HepG2 (cell line): ENCODE measurements at regions of chr4 and their contacts with region 1.

Region 1: DNA sequence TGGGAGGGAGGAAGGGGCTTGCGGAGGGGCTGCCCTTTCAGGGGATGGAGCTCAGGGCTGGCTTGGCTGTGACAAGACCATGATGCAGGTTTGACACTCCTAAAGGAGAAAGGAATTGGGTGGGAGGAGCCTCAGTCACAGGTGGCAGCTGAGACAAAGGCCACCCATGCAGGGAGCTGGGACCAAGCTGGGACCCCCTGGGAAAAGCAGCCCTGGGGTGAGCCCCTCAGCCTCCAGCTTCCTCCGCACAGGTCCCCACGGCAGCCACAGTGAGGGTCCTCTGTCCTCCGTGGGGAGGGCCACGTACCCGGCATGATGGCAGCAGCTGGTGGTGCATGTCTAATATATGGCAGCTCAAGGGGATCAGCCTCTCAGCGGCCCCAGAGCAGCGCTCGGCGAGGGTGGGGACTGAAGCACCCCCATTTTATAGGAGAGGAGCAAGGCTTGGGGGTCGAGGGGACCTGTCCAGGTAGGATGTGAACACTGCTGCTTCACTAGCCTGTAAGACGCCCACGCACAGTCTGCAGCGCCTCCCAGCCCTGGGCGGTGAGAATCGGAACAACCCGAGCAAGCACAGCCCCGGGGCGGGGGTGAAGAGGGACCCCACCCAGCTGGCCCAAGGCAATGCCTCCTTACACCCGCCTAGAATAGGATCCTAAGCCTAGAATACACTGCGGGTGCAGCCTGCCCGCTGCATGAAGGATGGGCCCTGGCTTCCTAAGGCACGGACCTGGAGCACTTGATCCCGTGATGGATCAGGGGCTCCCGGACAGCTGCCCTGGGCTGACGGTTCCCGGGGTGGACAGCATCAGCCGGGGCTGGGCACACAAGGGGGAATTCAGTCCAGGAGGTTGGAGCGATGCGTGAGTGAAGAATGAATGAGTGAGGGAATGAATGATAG is 17.5 kb downstream of the ADRA2C start:
- DNase-seq: no peak
- ATAC-seq: peak; percentile 27
- H3K4me3 ChIP-seq: peak overlapping the region in 1 of 3 experiments; percentile 48; a peak in 3 of 6 replicates
- H3K27ac ChIP-seq: peak overlapping the region; percentile 72
- H3K4me1 ChIP-seq: peaks cover 95% of the 10 kb centered on the region
- H3K27me3 ChIP-seq: peaks cover 0 to under 1% of the 10 kb centered on the region in 2 experiments; a peak in 1 of 5 replicates
- CTCF ChIP-seq: peak; percentile 75
- EP300 ChIP-seq: no peak
- POLR2A ChIP-seq: no peak
- RAD21 ChIP-seq: peak; percentile 48

Region 2: GRCh38 chr4:3765271-3766040 is 18.2 kb before region 1 on chr4:
- CTCF ChIA-PET with region 1: no interaction called
- POLR2A ChIA-PET with region 1: interaction called, 87 read pairs
- in situ Hi-C with region 1: no loop called
- intact Hi-C with region 1: loop called (anchors 1 kb)
- DNase-seq: peak; percentile 41
- ATAC-seq: peak; percentile 74
- H3K4me3 ChIP-seq: peak overlapping the region; percentile 54 to 75 (median 55); a peak in 5 of 6 replicates
- H3K27ac ChIP-seq: no peak overlapping the region
- H3K4me1 ChIP-seq: peaks cover 47% of the 10 kb centered on the region
- H3K27me3 ChIP-seq: no peaks in the 10 kb centered on the region; a peak in 2 of 5 replicates
- CTCF ChIP-seq: peak; percentile 32; the same call in 1 of the 2 replicates
- EP300 ChIP-seq: no peak
- POLR2A ChIP-seq: no peak
- RAD21 ChIP-seq: peak; percentile 69

Region 3: DNA sequence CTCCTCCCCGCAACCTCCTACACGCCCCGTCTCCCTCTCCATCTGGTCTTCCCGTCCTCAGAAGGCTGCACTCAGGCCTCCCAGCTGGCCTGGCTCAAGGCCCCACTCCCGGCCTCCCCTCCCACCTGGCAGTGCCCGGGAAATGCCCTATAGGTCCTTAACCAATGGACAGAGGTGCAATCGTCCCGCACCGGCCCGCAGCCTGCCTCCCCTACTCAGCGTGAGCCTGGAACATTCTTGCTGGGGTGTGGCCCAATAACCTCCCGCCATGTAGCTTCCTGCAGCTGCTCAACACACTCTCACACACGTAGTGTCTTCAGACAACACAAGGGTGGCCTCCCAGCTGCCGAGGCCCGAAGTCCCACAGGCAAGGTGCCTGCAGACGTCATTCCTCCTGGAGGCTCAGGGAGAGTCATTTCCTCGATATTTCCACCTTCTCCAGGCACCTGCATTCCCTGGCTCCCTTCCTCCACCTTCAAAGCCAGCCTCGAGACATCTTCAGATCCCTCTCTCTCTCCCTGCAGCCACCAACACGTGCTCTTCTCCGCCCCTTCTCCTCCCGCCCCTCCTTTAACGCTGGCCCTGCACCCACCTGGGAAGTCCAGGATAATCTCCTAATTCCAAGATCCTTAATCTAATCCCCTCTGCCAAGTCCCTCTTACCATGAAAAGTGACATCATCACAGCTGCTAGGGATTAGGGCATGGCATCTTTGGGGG is 38.7 kb after region 1 on chr4:
- CTCF ChIA-PET with region 1: no interaction called
- POLR2A ChIA-PET with region 1: interaction called, 88 read pairs
- in situ Hi-C with region 1: no loop called
- intact Hi-C with region 1: no loop called
- DNase-seq: peak; percentile 15
- ATAC-seq: no peak
- H3K4me3 ChIP-seq: no peak overlapping the region
- H3K27ac ChIP-seq: no peak overlapping the region
- H3K4me1 ChIP-seq: peaks cover 96% of the 10 kb centered on the region
- H3K27me3 ChIP-seq: no peaks in the 10 kb centered on the region
- CTCF ChIP-seq: no peak
- EP300 ChIP-seq: no peak
- POLR2A ChIP-seq: no peak
- RAD21 ChIP-seq: no peak

Region 4: DNA sequence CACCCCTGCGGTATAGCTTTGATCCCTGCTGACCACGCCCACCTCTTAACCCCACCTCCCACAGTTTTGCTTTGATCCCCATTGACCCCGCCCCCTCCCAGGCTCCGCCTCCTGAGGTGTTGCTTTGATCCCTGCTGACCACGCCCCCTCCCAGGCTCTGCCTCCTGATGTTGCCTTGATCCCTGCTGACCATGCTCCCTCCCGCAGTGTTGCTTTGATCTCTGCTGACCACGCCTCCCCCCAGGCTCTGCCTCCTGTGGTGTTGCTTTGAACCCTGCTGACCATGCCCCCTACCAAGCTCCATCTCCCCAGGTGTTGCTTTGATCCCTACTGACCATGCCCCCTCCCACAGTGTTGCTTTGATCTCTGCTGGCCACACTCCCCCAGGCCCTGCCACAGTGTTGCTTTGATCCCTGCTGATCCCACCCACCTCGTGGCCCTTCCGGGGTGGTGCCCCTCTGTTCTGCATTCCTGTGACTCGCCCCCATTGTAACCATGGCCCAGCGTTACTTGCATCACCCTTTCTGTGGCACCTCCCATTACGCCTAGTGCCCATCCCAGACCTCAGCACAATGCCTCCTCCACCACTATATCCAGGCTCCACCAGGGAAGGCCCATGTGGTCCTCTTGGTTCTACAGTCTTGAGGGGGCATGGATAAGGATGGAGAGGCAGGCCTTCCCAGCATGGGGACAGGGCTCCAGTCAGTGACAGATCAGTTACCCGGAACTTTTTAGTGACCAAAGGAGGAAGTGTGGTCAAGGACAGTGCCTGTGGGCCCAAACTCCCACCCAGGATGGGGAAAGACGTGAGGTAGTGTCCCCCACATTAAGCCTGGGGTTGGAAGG is 53.3 kb after region 1 on chr4:
- CTCF ChIA-PET with region 1: no interaction called
- POLR2A ChIA-PET with region 1: interaction called, 88 read pairs
- in situ Hi-C with region 1: loop called (anchors 5 kb)
- intact Hi-C with region 1: loop called (anchors 2 kb)
- DNase-seq: peak; percentile 99
- ATAC-seq: peak; percentile 89
- H3K4me3 ChIP-seq: no peak overlapping the region
- H3K27ac ChIP-seq: peak overlapping the region; percentile 95
- H3K4me1 ChIP-seq: peaks cover 79% of the 10 kb centered on the region
- H3K27me3 ChIP-seq: no peaks in the 10 kb centered on the region
- CTCF ChIP-seq: peak; percentile 56
- EP300 ChIP-seq: peak; percentile 97 to 98; a peak in 3 of 4 replicates
- POLR2A ChIP-seq: no peak
- RAD21 ChIP-seq: 0 out of 2 replicates have a peak, but pooled peaks have one; percentile 49

Region 5: GRCh38 chr4:3880615-3881120 is 97.0 kb after region 1 on chr4:
- CTCF ChIA-PET with region 1: interaction called, 4 read pairs
- POLR2A ChIA-PET with region 1: interaction called, 8 read pairs
- in situ Hi-C with region 1: no loop called
- intact Hi-C with region 1: loop called (anchors 5 kb)
- DNase-seq: peak; percentile 56
- ATAC-seq: peak; percentile 96
- H3K4me3 ChIP-seq: no peak overlapping the region
- H3K27ac ChIP-seq: no peak overlapping the region
- H3K4me1 ChIP-seq: peaks cover 16% of the 10 kb centered on the region
- H3K27me3 ChIP-seq: peaks cover 0 to 20% of the 10 kb centered on the region in 2 experiments; a peak in 2 of 5 replicates
- CTCF ChIP-seq: peak; percentile 96
- EP300 ChIP-seq: no peak
- POLR2A ChIP-seq: no peak
- RAD21 ChIP-seq: peak; percentile 96